Mammary epithelial cell (primary cell): ENCODE measurements at regions of chr22 and their contacts with region 1.

Region 1: DNA sequence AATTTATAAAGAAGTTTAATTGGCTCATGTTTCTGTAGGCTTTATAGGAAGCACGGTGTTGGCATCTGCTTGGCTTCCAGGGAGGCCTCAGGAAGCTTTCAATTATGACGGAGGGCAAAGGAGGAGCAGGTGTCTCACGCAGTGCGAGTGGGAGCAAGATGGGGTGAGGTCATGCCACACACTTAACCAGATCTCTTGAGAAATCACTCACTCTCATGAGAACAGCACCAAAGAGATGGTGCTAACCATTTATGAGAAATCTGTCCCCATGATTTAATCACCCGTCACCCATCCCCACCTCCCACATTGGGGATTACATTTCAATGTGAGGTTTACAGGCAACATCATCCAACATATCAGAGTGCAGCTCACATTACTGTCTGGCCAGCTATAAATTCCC is 103.5 kb downstream of the ARHGAP8 start:
- DNase-seq: no peak
- H3K4me3 ChIP-seq: no peak overlapping the region
- H3K27ac ChIP-seq: no peak overlapping the region
- H3K4me1 ChIP-seq: peaks cover 20% of the 10 kb centered on the region
- H3K27me3 ChIP-seq: no peaks in the 10 kb centered on the region
- CTCF ChIP-seq: no peak

Region 2: GRCh38 chr22:45064313-45065278 is 208.7 kb after region 1 on chr22:
- CTCF ChIA-PET with region 1: no interaction called
- dilution Hi-C with region 1: loop called (anchors 5 kb)
- in situ Hi-C with region 1: no loop called
- intact Hi-C with region 1: no loop called
- DNase-seq: peak; percentile 92
- H3K4me3 ChIP-seq: no peak overlapping the region
- H3K27ac ChIP-seq: no peak overlapping the region
- H3K4me1 ChIP-seq: peaks cover 11% of the 10 kb centered on the region
- H3K27me3 ChIP-seq: peaks cover 3% of the 10 kb centered on the region
- CTCF ChIP-seq: no peak

Region 3: GRCh38 chr22:45462034-45462690 is 606.3 kb after region 1 on chr22:
- CTCF ChIA-PET with region 1: no interaction called
- dilution Hi-C with region 1: loop called (anchors 10 kb)
- in situ Hi-C with region 1: no loop called
- intact Hi-C with region 1: no loop called
- DNase-seq: no peak
- H3K4me3 ChIP-seq: no peak overlapping the region
- H3K27ac ChIP-seq: no peak overlapping the region
- H3K4me1 ChIP-seq: no peaks in the 10 kb centered on the region
- H3K27me3 ChIP-seq: no peaks in the 10 kb centered on the region
- CTCF ChIP-seq: no peak